HAP-1 (cell line): ENCODE measurements at regions of chr7 and their contacts with region 1.

Region 1: GRCh38 chr7:91089382-91089963 is 174.8 kb upstream of the FZD1 start:
- DNase-seq: peak; percentile 20 to 52
- H3K4me3 ChIP-seq: peak overlapping the region; percentile 9; the same call in 1 of the 2 replicates
- H3K4me1 ChIP-seq: peaks cover 2% of the 10 kb centered on the region; the same call in 1 of the 2 replicates
- H3K27me3 ChIP-seq: no peaks in the 10 kb centered on the region

Region 2: DNA sequence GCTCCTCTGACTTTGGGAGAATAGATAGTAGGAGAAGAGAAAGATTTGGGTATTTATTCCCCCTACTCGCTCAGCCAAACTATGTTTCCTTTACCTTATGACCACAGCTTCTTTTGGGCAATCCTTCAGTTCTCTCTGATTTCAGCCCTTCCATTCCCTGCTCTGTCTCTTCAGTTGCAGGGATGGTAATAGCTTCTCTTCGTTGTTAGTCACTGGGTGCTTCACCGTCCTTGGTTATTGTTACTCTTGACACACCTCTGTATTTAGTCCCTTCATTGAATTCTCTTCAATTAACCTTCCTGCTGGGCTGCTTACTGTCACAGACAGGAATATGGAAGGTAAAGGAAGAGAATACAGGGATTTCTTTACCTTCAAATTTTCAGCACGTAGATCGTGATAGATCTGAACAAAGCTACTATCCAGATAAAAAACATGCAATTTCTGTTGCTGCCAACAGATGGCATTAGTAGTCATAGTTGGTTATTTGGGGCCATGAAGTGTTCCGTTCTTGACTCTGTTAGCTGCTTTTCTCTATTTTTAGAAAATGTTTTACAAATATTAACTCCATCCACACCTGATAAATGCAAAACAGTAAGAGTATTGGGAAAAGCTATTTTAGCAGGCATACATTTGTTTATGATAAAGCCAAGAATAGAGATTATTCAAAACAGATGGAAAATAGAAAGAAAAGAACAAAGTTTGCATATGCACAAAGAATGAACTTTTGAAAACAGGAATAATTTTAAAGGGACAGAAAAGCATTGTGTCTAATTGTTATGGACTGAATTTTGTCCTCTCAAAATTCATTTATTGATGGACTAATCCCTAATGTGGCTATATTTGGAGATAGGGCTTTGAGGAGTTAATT is 634.1 kb before region 1 on chr7:
- in situ Hi-C with region 1: no loop called
- DNase-seq: peak; percentile 32 to 75
- H3K4me3 ChIP-seq: no peak overlapping the region; the same call in 1 of the 2 replicates
- H3K4me1 ChIP-seq: peaks cover 12% of the 10 kb centered on the region
- H3K27me3 ChIP-seq: no peaks in the 10 kb centered on the region

Region 3: GRCh38 chr7:91264046-91264923 is 174.8 kb after region 1 on chr7 and contains the start of gene FZD1:
- in situ Hi-C with region 1: loop called (anchors 25 kb)
- DNase-seq: peak; percentile 97 to 98
- H3K4me3 ChIP-seq: peak within 1 kb of the TSS; percentile 52
- H3K4me1 ChIP-seq: peaks cover 10% of the 10 kb centered on the region
- H3K27me3 ChIP-seq: no peaks in the 10 kb centered on the region

Region 4: GRCh38 chr7:91473619-91474018 is 384.1 kb after region 1 on chr7:
- in situ Hi-C with region 1: no loop called
- DNase-seq: no peak
- H3K4me3 ChIP-seq: no peak overlapping the region
- H3K4me1 ChIP-seq: no peaks in the 10 kb centered on the region
- H3K27me3 ChIP-seq: no peaks in the 10 kb centered on the region

Region 5: DNA sequence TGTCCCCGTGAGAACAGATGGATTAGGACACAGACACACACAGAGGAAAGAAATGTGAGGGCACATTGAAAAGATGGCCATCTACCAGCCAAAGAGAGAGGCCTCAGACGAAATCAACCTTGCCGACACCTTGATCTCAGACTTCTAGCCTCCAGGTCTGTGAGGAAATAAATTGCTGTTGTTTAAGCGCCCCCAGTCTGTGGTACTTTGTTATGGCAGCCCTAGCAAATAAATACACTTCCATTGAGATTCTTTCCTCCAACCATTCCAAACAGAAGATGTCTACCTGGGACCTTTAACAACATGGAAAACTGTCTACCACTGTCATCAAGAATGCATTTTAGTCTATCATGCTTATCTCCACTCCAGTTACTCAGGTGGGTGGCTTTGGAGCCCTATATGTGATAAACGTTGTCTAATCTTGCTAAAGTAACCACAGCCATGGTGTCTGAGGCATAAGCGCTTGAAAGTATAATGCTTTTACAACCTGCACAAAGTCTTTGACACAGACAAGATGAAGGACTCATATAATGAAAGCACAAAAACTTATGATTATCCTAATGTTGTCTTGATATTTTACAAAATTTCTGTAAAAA is 546.8 kb after region 1 on chr7:
- in situ Hi-C with region 1: loop called (anchors 25 kb)
- DNase-seq: peak; percentile 49 to 57
- H3K4me3 ChIP-seq: no peak overlapping the region
- H3K4me1 ChIP-seq: no peaks in the 10 kb centered on the region
- H3K27me3 ChIP-seq: no peaks in the 10 kb centered on the region

Region 6: DNA sequence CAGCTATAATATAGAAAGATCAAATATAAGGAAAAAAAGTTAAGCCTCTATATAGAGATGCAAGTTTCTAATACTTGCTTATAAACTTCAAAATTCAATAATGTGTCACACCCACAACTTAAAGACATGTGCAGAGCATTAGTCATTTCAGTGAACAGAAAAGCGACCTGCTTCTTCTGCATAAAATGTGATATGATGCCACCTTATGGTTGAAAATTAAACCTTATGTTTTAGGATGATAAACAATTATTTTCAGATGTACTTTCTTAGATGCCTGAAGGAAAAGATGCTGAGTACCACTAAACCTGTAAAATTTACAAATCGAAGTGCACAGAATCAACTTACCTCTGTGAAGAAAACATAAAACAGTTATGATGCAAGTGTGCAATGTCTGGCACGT is 695.0 kb after region 1 on chr7:
- in situ Hi-C with region 1: loop called (anchors 25 kb)
- DNase-seq: peak in 1 of 2 experiments; percentile 43
- H3K4me3 ChIP-seq: no peak overlapping the region
- H3K4me1 ChIP-seq: peaks cover 3% of the 10 kb centered on the region; the same call in 1 of the 2 replicates
- H3K27me3 ChIP-seq: peaks cover 27% of the 10 kb centered on the region

Region 7: DNA sequence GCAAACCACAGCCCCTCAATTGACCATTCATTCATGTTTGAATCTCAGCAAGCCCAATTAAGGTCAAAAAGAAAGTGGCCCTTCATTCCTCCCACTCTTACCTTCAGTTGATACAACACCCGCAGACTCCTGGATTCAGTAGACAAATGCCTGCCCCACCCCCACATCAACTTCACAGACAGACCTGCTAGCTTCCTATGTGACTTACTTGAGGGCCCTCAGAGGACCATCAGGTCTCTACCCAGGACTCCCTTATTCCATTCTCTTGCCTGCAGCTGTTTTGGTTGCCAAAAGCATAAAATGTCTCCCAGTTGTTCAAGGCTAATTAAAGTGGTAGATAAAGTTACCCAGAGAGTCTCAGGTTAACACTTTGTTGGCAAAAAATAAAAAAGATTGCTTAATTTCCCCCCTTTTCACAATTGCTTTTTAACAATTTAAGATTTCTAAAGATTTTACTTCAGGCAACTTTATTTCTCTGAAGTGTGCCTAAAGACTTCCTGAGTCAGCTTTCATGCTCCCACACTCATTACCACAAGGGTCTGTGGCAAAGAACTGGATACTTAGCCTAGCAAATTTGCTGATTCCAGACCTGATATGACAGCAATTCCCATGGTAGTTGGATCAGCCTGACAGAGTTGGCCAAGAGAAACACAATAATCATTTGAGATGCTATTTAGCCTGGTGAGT is 794.3 kb after region 1 on chr7:
- in situ Hi-C with region 1: no loop called
- DNase-seq: no peak
- H3K4me3 ChIP-seq: no peak overlapping the region
- H3K4me1 ChIP-seq: peaks cover 7% of the 10 kb centered on the region
- H3K27me3 ChIP-seq: no peaks in the 10 kb centered on the region

Region 8: GRCh38 chr7:91953618-91954017 is 864.1 kb after region 1 on chr7:
- in situ Hi-C with region 1: no loop called
- DNase-seq: no peak
- H3K4me3 ChIP-seq: no peak overlapping the region
- H3K4me1 ChIP-seq: peaks cover 7% of the 10 kb centered on the region
- H3K27me3 ChIP-seq: no peaks in the 10 kb centered on the region